Ascending aorta (tissue), 2 donors: ENCODE measurements at regions of chr7 and their contacts with region 1.

Region 1: GRCh38 chr7:322111-322671 is 32.2 kb downstream of the FOXL3 start:
- DNase-seq: peak in 1 of 2 donors; percentile 83
- H3K4me3 ChIP-seq: no peak overlapping the region
- H3K27ac ChIP-seq: no peak overlapping the region
- H3K4me1 ChIP-seq: peaks cover 0 to 4% of the 10 kb centered on the region in 2 donors
- H3K27me3 ChIP-seq: no peaks in the 10 kb centered on the region
- CTCF ChIP-seq: peak; percentile 86 to 94 (median 90)

Region 2: GRCh38 chr7:636396-636795 is 314.2 kb after region 1 on chr7:
- intact Hi-C with region 1: loop called (anchors 1 kb)
- DNase-seq: peak in 1 of 2 donors; percentile 77
- H3K4me3 ChIP-seq: no peak overlapping the region
- H3K27ac ChIP-seq: no peak overlapping the region
- H3K4me1 ChIP-seq: no peaks in the 10 kb centered on the region
- H3K27me3 ChIP-seq: no peaks in the 10 kb centered on the region
- CTCF ChIP-seq: peak; percentile 58 to 73 (median 67)

Region 3: GRCh38 chr7:726084-726853 is 404.1 kb after region 1 on chr7 and contains the start of gene DNAAF5:
- intact Hi-C with region 1: loop called (anchors 5 kb)
- DNase-seq: peak; percentile 30 to 88
- H3K4me3 ChIP-seq: peak within 1 kb of the TSS; percentile 78 to 97
- H3K27ac ChIP-seq: peak within 1 kb of the TSS; percentile 41 to 55
- H3K4me1 ChIP-seq: peaks cover 0 to 4% of the 10 kb centered on the region in 2 donors
- H3K27me3 ChIP-seq: no peaks in the 10 kb centered on the region
- CTCF ChIP-seq: no peak
- total RNA-seq, gene DNAAF5: 20.5 TPM

Region 4: DNA sequence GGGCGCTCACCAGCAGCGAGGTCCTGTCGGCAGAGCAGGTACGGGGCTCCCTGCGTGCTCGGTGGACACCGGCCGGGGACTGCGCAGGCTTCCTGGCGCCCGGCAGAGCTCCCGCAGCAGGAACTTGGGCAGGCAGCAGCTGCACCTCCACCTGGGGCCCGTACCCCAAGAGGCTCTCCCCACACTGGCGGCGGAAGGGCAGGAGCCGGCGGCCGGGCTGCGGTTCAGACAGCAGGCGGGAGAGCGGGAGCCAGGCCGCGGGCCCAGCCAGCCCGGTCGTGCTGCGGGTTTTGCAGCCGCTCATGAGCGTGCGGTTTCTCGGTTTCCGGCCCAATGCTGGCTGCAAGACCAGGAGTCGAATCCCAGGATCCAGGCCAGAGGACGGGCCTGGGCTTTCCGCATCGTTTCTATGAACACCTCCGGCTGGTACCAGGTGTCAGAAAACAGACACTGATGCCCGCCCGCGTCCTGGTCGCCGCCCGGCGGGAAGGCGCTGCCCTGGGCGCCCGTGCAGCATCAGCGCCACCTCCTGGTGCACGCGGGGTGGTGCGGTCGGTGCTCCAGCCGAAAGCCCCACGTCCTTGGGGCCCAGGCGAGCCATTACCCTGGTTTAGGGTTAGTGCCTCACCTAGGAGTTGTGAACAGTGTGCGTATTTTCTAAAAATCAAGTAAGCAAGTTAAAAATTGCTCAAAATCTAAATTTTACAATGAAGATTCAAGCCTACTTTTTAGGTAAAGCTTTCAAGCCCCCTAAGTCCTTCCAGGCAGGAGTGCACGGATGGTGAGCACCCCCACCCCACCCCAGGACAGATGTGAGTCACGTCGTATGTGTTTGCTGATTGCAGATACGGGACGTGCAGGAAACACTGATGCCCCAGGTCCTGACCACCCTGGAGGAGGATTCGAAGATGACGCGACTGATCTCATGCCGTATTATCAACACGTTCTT is 452.2 kb after region 1 on chr7:
- intact Hi-C with region 1: loop called (anchors 1 kb)
- DNase-seq: no peak
- H3K4me3 ChIP-seq: no peak overlapping the region
- H3K27ac ChIP-seq: no peak overlapping the region
- H3K4me1 ChIP-seq: peaks cover 6 to 20% of the 10 kb centered on the region in 2 donors
- H3K27me3 ChIP-seq: no peaks in the 10 kb centered on the region
- CTCF ChIP-seq: peak; percentile 90 to 96 (median 94)